ENCODE measurements at regions of chr9 and their contacts with region 1.

Region 1: GRCh38 chr9:116234106-116234505 is 80.5 kb downstream of the PAPPA start:
- DNase-seq: no peak
- H3K4me3 ChIP-seq: no peak overlapping the region
- H3K27ac ChIP-seq: no peak overlapping the region
- H3K4me1 ChIP-seq: no peaks in the 10 kb centered on the region
- H3K27me3 ChIP-seq: no peaks in the 10 kb centered on the region
- CTCF ChIP-seq: no peak

Region 2: GRCh38 chr9:116298878-116299391 is 64.8 kb after region 1 on chr9:
- CTCF ChIA-PET with region 1: no interaction called
- POLR2A ChIA-PET with region 1: interaction called, 6 read pairs
- intact Hi-C with region 1: loop called (anchors 10 kb)
- DNase-seq: no peak
- H3K4me3 ChIP-seq: no peak overlapping the region
- H3K27ac ChIP-seq: no peak overlapping the region
- H3K4me1 ChIP-seq: no peaks in the 10 kb centered on the region
- H3K27me3 ChIP-seq: no peaks in the 10 kb centered on the region
- CTCF ChIP-seq: no peak